ENCODE measurements at regions of chr2 and their contacts with region 1.

Region 1: DNA sequence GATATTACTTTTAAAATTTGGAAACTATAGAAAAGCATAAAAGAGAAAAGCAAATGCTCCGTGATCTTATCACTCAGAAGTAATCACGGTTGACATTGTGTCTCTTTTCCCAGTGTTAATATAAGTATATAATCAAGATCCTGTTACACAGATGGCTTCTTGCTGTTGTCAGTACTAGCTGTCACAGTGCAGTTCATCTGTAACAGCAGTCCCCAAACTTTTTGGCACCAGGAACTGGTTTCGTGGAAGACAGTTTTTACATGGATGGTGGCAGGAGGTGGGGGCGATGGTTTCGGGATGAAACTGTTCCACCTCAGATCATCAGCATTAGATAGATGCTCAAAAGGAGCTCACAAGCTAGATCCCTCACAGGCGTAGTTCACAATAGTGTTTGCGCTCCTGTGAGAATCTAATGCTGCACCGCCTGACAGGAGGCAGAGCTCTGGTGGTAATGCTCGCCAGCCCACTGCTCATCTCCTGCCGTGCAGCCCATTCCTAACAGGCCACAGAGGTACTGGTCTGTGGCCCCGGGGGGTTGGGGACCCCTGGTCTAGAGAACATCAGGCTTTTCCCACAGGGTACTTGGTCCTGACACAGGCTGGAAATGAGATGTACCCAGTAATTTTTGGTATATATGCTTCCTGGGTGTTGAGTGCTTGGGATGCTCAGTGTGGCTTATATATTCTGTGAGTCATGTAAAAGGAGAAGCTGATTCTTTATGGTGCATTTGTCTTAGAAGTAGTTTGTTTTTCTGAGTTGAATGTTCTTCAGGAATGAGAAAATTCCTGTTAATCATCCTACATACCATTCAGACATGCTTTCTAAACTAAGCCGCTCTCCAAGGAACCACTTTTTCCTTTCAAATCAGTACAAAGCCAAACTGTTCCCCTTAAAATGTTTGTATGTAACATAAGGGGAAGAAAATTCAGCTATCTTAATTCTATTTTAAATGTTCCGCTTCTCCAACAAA is 121.8 kb downstream of the NCK2 start:
- DNase-seq: no peak
- ATAC-seq: no peak

Region 2: GRCh38 chr2:105827351-105828096 is 39.0 kb before region 1 on chr2:
- intact Hi-C with region 1: loop called (anchors 2 kb)
- DNase-seq: no peak
- ATAC-seq: no peak

Measured in Right ventricle myocardium inferior (tissue), 1 donor.